ENCODE measurements at regions of chr10 and their contacts with region 1.

Region 1: DNA sequence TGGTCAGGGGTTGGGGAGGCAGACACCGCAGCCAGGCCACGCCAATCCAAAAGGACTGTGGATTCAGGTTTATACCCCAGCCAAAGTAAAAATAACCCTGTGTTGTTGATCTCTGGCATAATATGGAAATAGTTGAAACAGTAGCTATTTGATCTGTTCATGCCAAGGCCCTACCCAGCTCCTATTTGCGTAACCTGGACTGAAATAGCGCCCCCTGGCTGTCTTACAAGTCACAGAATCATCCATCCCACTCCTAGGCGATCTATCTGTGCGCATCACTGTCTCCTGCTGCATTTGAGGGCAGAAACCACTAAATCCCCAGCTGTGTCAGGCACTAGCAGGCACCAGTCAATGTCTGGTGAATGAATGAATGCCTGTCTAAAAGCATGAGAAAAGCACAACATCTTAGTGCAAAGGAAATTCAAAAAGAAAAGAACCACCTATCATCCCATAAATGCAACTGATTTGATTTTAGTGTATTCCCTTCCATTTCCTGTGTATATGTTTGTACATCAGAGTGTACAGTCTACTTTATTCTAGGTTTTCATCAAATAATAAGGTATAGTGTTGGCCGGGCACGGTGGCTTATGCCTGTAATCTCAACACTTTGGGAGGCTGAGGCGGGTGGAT is 160.0 kb downstream of the SLIT1 start:
- DNase-seq: no peak
- H3K4me3 ChIP-seq: no peak overlapping the region
- H3K27ac ChIP-seq: peak overlapping the region; percentile 79
- H3K4me1 ChIP-seq: peaks cover 30% of the 10 kb centered on the region
- H3K27me3 ChIP-seq: no peaks in the 10 kb centered on the region
- CTCF ChIP-seq: peak; percentile 71

Region 2: GRCh38 chr10:96765406-96766240 is 260.1 kb before region 1 on chr10:
- intact Hi-C with region 1: loop called (anchors 10 kb)
- DNase-seq: peak; percentile 61
- H3K4me3 ChIP-seq: no peak overlapping the region
- H3K27ac ChIP-seq: no peak overlapping the region
- H3K4me1 ChIP-seq: no peaks in the 10 kb centered on the region
- H3K27me3 ChIP-seq: peaks cover under 1% of the 10 kb centered on the region
- CTCF ChIP-seq: peak; percentile 83

Region 3: DNA sequence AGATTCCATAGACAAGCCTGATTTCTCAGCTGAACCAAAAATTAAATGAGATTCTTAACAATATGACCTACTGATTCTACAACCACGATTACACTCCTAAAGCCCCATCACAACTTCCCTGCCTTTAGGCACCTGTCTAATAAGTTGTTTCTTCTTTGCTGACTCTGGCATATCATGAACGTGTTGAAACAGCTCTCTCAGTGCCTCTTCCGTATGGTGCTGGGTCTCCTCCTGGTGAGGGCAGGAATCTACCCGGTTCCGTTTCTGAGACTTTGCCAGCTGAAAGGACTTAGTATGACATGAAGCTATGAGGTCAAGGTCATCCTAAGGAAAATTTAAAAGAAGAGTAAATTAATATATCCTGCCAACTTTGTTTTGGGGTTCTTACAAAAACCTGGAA is 218.1 kb after region 1 on chr10:
- intact Hi-C with region 1: no loop called
- DNase-seq: no peak
- H3K4me3 ChIP-seq: no peak overlapping the region
- H3K27ac ChIP-seq: no peak overlapping the region
- H3K4me1 ChIP-seq: peaks cover 9% of the 10 kb centered on the region
- H3K27me3 ChIP-seq: no peaks in the 10 kb centered on the region
- CTCF ChIP-seq: no peak

Region 4: DNA sequence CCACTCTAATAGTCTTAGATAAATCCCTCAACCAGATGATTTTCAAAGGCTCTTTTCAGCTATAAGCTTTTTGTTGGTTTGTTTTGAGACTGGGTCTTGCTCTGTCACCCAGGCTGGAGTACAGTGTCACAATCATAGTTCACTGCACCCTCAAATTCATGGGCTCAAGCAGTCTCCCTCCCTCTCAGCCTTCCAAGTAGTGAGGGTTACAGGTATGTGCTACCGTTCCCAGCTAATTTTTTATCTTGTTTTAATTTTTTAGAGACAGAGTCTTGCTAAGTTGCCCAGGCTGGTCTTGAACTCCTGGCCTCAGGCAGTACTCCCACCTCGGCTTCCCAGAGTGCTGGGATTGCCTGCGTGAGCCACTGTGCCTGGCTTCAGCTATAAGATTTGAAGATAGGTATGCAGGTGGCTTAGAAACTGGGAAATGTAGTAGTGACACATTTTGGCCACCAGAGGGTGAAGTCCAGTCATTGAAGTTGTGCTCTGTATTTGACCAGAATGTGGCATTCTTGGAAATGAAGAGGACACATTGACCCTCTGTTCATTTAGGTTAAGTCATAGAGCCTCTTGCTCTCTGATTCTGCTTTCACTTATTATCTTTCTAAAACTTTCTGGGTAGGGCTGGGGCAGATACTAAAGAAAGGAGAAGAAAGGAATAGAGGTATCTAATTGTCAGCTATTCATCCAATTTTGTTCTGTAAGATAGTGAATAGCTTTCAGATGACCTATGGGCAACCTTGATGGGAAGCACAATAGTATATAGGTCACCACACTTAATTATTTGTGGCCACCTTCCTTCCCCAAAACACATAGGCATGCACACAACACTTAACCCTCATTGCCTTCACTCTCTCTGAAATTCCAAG is 1144.8 kb after region 1 on chr10:
- intact Hi-C with region 1: no loop called
- DNase-seq: no peak
- H3K4me3 ChIP-seq: no peak overlapping the region
- H3K27ac ChIP-seq: no peak overlapping the region
- H3K4me1 ChIP-seq: peaks cover 36% of the 10 kb centered on the region
- H3K27me3 ChIP-seq: no peaks in the 10 kb centered on the region
- CTCF ChIP-seq: peak; percentile 85